ENCODE measurements at regions of chr22 and their contacts with region 1.

Region 1: DNA sequence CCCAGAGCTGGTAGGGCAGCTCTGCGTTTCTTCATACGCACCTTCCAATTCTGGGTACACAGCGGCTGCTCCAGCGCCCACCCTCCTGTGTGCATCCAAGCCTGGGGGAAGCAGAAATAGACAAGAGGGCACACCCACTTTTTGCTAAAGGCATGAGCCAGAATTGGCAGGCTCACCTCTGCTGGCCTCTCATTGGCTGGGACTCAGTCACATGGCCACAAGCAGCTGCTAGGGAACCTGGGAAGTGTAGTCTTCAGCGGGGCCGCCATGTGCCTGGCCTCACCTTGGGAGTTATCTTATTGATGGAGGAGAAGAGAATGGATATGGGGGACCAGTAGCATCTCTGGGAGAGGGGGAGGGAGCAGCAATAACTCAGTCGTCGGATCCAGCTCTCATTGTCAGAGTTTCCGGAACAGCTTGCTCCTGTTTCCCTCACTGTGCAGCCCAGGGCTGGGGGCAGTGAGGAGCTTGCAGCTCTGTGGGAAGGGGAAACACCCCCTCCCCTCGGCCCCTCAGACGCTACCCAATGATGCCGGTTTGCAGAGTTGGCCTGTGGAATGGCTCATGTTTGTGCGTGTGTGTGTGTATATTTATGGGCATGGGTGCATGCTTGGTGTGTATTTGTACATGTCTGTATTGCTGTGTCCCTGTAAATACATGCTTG is 11.8 kb upstream of the MIEF1 start:
- DNase-seq: no peak
- ATAC-seq: peak; percentile 99
- H3K4me3 ChIP-seq: no peak overlapping the region
- H3K27ac ChIP-seq: no peak overlapping the region
- H3K4me1 ChIP-seq: peaks cover 7% of the 10 kb centered on the region; the same call in 1 of the 2 replicates
- H3K27me3 ChIP-seq: no peaks in the 10 kb centered on the region
- CTCF ChIP-seq: no peak
- EP300 ChIP-seq: no peak
- POLR2A ChIP-seq: 0 out of 2 replicates have a peak, but pooled peaks have one; percentile 30
- RAD21 ChIP-seq: no peak

Region 2: DNA sequence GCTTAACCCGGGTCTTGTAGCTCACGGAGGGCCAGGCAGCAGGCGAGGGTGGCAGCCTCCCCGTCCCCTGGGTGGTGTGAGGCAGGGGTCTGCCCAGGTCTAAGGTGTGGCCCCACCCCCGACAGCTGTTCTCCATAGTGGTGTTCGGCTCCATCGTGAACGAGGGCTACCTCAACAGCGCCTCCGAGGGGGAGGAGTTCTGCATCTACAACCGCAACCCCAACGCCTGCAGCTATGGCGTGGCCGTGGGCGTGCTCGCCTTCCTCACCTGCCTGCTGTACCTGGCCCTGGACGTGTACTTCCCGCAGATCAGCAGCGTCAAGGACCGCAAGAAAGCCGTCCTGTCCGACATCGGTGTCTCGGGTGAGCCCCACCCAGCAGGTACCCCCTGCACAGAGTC is 116.1 kb before region 1 on chr22:
- CTCF ChIA-PET with region 1: no interaction called
- POLR2A ChIA-PET with region 1: no interaction called
- RAD21 ChIA-PET with region 1: no interaction called
- SMC1A ChIA-PET with region 1: no interaction called
- in situ Hi-C with region 1: no loop called
- intact Hi-C with region 1: no loop called
- DNase-seq: no peak
- ATAC-seq: no peak
- H3K4me3 ChIP-seq: no peak overlapping the region
- H3K27ac ChIP-seq: no peak overlapping the region
- H3K4me1 ChIP-seq: no peaks in the 10 kb centered on the region
- H3K27me3 ChIP-seq: no peaks in the 10 kb centered on the region
- CTCF ChIP-seq: no peak
- EP300 ChIP-seq: no peak
- POLR2A ChIP-seq: no peak
- RAD21 ChIP-seq: no peak

Region 3: DNA sequence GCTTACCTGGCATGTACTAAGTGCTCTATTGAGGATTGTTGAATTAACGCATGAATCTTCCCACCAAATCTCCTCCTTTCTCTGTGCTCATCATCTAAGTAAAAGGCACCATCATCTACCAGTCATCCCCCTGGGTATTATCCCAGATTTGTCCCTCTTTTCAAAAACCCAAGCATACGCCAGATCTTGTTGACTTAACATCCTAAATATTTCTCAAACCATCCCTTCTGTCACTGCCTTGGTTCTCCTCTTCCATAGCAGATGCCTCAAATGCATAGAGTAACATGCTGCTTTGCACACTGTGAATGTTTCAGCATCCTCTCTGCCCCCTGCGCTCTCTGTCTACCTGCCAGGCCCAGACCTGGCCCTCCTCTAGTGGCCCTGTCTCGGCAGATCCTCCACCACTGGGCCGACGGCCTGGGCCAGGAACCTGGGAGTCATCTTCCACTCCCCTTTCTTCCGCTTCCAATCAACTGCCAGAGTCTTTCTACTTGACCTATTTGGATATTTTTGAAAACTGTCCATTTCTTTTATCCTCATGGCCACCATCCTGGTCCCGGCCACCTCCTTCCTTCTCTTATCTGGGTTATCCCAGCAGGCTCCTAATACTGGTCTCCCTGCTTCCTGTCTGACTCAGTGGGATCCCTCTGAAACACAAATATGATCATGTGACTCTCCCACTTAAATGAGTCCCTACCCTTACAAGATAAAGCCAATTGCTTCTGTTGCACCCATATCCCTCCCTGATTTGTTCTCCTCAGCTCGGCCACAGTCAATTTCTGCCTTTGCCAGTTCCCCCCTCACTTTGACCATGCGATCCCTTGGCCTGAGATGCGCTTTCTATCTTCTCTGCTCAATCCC is 94.1 kb before region 1 on chr22:
- CTCF ChIA-PET with region 1: interaction called, 15 read pairs
- POLR2A ChIA-PET with region 1: interaction called, 3 read pairs
- RAD21 ChIA-PET with region 1: no interaction called
- SMC1A ChIA-PET with region 1: interaction called, 6 read pairs
- in situ Hi-C with region 1: no loop called
- intact Hi-C with region 1: no loop called
- DNase-seq: no peak
- ATAC-seq: no peak
- H3K4me3 ChIP-seq: no peak overlapping the region
- H3K27ac ChIP-seq: no peak overlapping the region
- H3K4me1 ChIP-seq: peaks cover 7% of the 10 kb centered on the region
- H3K27me3 ChIP-seq: no peaks in the 10 kb centered on the region
- CTCF ChIP-seq: no peak
- EP300 ChIP-seq: no peak
- POLR2A ChIP-seq: no peak
- RAD21 ChIP-seq: no peak

Region 4: GRCh38 chr22:39471381-39472141 is 18.7 kb before region 1 on chr22:
- CTCF ChIA-PET with region 1: interaction called, 13 read pairs
- POLR2A ChIA-PET with region 1: interaction called, 7 read pairs
- RAD21 ChIA-PET with region 1: interaction called, 3 read pairs
- SMC1A ChIA-PET with region 1: interaction called, 15 read pairs
- in situ Hi-C with region 1: no loop called
- intact Hi-C with region 1: no loop called
- DNase-seq: peak; percentile 83
- ATAC-seq: peak; percentile 89
- H3K4me3 ChIP-seq: peak overlapping the region; percentile 50; the same call in 1 of the 2 replicates
- H3K27ac ChIP-seq: peak overlapping the region; percentile 76
- H3K4me1 ChIP-seq: peaks cover 47% of the 10 kb centered on the region
- H3K27me3 ChIP-seq: no peaks in the 10 kb centered on the region
- CTCF ChIP-seq: no peak
- EP300 ChIP-seq: no peak
- POLR2A ChIP-seq: no peak
- RAD21 ChIP-seq: no peak

Region 5: DNA sequence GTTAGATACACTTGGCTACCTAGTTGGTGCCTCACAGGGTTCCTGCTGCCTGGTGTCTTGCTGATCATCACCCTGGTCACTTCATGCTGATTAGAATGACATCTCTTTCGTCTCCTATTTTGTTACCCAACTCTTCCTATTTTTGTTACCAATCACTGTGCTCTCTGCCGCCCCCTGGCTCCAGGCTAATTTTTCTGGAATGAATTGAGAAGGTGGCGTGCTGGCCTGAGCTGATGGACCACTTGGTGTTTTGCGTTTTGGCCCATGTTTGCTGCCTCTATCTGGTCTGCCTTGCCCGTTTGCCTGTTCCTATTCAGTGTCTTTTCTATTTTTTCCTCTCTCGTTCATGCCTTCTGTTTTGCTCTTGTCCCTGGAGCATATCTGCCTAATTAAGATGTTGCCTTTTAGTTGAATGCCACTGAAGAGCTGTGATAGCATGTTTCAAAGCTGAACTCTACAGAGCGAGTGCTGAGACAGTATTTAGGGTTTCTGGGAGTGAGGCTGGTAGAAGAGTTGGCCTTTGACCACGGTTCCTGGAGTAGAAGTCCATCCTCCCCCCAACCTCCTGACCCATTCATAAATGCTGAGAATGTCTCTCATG is 24.2 kb after region 1 on chr22:
- CTCF ChIA-PET with region 1: interaction called, 372 read pairs
- POLR2A ChIA-PET with region 1: interaction called, 6 read pairs
- RAD21 ChIA-PET with region 1: interaction called, 5 read pairs
- SMC1A ChIA-PET with region 1: interaction called, 4 read pairs
- in situ Hi-C with region 1: no loop called
- intact Hi-C with region 1: no loop called
- DNase-seq: no peak
- ATAC-seq: peak; percentile 59
- H3K4me3 ChIP-seq: no peak overlapping the region
- H3K27ac ChIP-seq: no peak overlapping the region
- H3K4me1 ChIP-seq: peaks cover 16% of the 10 kb centered on the region
- H3K27me3 ChIP-seq: no peaks in the 10 kb centered on the region
- CTCF ChIP-seq: peak; percentile 66 to 74 (median 70)
- EP300 ChIP-seq: no peak
- POLR2A ChIP-seq: no peak
- RAD21 ChIP-seq: peak; percentile 51

Region 6: DNA sequence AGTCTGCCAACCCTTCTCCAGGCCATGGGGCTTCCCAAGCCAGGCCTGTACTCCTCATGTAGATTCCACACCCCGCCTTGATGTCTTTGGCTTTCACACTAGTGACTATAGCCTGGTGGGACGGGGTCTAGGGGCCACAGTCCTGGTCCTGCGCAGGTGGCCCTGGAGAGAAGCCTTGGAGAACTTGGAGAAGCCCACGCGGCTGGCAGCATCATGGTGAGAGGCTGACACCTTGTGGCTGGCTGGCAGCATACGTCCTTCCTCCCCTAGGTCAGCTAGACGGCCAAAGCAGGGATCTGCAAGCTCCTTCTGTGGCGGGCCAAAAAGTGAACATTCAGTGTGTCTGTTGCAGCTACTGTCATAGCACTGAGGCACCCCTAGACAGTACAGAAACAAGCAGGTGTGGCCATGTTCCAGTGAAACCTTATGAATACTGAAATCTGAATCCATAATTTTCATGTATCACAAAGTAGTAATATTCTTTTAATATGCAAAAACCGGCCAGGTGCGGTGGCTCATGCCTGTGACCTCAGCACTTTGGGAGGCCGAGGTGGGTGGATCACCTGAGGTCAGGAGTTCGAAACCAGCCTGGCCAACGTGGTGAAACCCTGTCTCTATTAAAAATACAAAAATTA is 546.4 kb after region 1 on chr22:
- CTCF ChIA-PET with region 1: interaction called, 4 read pairs
- POLR2A ChIA-PET with region 1: no interaction called
- RAD21 ChIA-PET with region 1: no interaction called
- SMC1A ChIA-PET with region 1: interaction called, 3 read pairs
- in situ Hi-C with region 1: loop called (anchors 5 kb)
- intact Hi-C with region 1: loop called (anchors 5 kb)
- DNase-seq: no peak
- ATAC-seq: peak; percentile 97
- H3K4me3 ChIP-seq: no peak overlapping the region
- H3K27ac ChIP-seq: no peak overlapping the region
- H3K4me1 ChIP-seq: no peaks in the 10 kb centered on the region
- H3K27me3 ChIP-seq: peaks cover 6 to 8% of the 10 kb centered on the region in 2 experiments
- CTCF ChIP-seq: peak; percentile 77 to 91 (median 88)
- EP300 ChIP-seq: no peak
- POLR2A ChIP-seq: no peak
- RAD21 ChIP-seq: peak; percentile 86